ENCODE measurements at regions of chr15 and their contacts with region 1.

Region 1: GRCh38 chr15:67863442-67863987 is 23.7 kb upstream of the RNU6-1 start:
- DNase-seq: peak; percentile 92

Region 2: GRCh38 chr15:68053701-68054627 is 190.4 kb after region 1 on chr15 and contains the start of gene PIAS1:
- intact Hi-C with region 1: loop called (anchors 10 kb)
- DNase-seq: peak; percentile 98
- total RNA-seq, gene PIAS1: 29.4 TPM

Region 3: GRCh38 chr15:68154923-68155559 is 291.5 kb after region 1 on chr15:
- intact Hi-C with region 1: loop called (anchors 1 kb)
- DNase-seq: no peak

Region 4: GRCh38 chr15:68210821-68211655 is 347.5 kb after region 1 on chr15:
- intact Hi-C with region 1: loop called (anchors 2 kb)
- DNase-seq: peak; percentile 71

Measured in cardiac septum (tissue), 1 donor.